ENCODE measurements at regions of chr11 and their contacts with region 1.

Region 1: GRCh38 chr11:20647976-20648565 is 21.3 kb upstream of the NELL1 start:
- DNase-seq: no peak
- ATAC-seq: peak; percentile 30 to 53

Region 2: DNA sequence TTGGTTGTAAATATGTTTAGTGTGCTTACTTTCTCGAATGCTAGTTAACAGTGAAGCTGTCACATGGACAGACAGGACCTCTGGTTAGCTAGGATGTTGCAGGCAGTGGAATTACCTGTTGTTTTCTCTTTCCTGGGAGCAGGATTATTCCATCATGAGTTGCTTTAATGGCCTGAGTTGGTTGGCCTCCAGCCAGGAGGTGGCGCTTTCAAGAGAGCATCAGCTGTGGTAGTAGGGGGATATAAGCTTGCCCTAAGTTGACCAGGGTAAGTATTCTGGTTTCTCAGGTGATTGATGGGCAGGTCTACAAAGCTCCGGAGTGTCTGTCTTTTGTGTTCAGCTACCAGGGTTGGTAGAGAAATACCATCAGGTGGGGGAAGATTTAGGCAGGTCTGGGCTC is 64.8 kb after region 1 on chr11:
- intact Hi-C with region 1: no loop called
- DNase-seq: no peak
- ATAC-seq: no peak

Region 3: GRCh38 chr11:21511835-21512440 is 863.9 kb after region 1 on chr11:
- intact Hi-C with region 1: loop called in 1 of 2 experiments (anchors 5 kb)
- DNase-seq: peak; percentile 45
- ATAC-seq: peak; percentile 55 to 73

Measured in left cardiac atrium (tissue), 4 donors.